Tibial artery (tissue), 4 donors: ENCODE measurements at regions of chr5 and their contacts with region 1.

Region 1: DNA sequence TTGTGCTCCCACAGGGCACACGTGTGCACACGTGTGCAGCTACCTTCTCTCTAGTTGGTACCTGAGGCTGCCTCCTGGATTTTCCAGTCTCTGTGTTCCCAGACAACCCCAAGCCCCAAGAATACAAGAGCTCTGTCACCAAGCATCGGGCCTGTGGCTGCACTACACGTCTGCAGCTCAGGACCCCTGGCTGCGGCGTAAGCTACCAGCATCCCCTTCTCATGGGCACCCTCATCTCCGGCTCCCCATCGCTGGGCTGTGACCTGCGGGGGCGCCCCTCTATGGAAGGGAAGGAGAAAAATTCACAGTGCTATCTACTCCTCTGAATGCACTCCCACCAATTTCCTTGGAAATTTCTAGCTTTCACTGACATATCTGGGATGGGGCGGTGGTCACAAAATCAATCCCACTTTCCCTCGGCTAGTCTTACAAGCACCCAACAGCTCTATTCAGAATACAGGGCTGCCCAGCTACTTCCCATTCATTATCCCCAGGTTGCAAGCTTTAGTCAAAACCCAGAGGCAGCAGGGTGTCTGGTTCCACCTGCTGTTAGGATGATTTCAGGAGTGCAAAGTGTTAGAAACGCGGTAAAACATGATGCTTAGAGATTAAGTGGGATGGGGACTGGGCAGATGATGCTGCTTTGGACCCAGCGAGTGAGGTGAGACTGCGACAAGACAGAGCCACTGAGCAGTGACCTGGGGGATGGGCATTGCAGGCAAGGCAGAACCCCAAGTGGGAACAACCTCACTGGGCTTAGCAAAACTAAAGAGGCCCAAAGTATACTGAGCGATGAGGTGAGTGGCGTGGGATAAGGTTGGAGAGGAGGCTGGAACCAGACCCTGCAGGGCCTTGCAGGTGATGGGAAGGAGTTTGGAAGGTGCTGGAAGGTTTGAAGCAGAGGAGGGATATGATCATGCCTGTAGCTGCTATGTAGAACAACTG is 121.7 kb downstream of the KCNIP1 start:
- DNase-seq: peak in 1 of 2 donors; percentile 47
- H3K4me3 ChIP-seq: no peak overlapping the region
- H3K27ac ChIP-seq: no peak overlapping the region
- H3K4me1 ChIP-seq: no peaks in the 10 kb centered on the region
- H3K27me3 ChIP-seq: peaks cover 0 to 13% of the 10 kb centered on the region in 2 donors
- CTCF ChIP-seq: no peak

Region 2: GRCh38 chr5:170434966-170435605 is 190.4 kb before region 1 on chr5:
- intact Hi-C with region 1: loop called (anchors 5 kb)
- DNase-seq: peak; percentile 43 to 75
- H3K4me3 ChIP-seq: no peak overlapping the region
- H3K27ac ChIP-seq: no peak overlapping the region
- H3K4me1 ChIP-seq: peaks cover 0 to 7% (median 0%) of the 10 kb centered on the region in 4 donors
- H3K27me3 ChIP-seq: peaks cover 0 to 31% of the 10 kb centered on the region in 2 donors
- CTCF ChIP-seq: peak; percentile 89 to 97